GM10248 (cell line): ENCODE measurements at regions of chr16 and their contacts with region 1.

Region 1: GRCh38 chr16:56964243-56965148 is 2.7 kb downstream of the CETP start:
- DNase-seq: peak; percentile 90
- CTCF ChIP-seq: peak; percentile 99

Region 2: DNA sequence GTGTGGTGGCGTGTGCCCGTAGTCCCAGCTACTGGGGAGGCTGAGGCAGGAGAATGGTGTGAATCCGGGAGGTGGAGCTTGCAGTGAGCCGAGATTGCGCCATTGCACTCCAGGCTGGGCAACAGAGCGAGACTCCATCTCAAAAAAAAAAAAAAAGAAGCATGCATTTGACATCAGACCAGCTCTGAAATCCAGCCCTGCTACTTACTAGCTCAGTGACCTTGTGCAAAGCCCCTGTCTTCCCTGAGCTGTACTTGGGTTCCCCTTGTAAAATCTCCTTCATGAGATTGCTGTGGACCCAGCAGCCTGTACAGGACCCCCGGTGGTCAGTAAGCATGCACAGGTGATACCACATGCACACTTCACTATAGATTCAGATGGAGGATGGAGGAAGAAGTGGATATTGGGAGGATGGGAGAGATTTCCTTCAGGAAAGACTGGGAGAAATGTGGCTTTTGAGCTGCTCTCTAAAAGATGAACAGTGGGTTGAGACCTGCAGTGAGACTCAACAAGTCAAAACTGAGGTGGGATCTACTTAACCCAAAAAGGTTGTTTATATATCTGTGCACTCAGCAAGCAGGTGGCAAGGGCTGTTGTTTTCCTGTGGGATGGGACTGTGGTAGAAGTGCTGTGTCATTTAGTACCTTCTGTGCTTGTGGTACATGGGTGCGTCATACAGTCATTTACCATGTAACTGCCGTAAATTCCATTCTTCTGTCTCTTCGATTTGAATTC is 25.9 kb before region 1 on chr16:
- CTCF ChIA-PET with region 1: interaction called, 12 read pairs
- POLR2A ChIA-PET with region 1: no interaction called
- DNase-seq: no peak
- CTCF ChIP-seq: no peak

Region 3: DNA sequence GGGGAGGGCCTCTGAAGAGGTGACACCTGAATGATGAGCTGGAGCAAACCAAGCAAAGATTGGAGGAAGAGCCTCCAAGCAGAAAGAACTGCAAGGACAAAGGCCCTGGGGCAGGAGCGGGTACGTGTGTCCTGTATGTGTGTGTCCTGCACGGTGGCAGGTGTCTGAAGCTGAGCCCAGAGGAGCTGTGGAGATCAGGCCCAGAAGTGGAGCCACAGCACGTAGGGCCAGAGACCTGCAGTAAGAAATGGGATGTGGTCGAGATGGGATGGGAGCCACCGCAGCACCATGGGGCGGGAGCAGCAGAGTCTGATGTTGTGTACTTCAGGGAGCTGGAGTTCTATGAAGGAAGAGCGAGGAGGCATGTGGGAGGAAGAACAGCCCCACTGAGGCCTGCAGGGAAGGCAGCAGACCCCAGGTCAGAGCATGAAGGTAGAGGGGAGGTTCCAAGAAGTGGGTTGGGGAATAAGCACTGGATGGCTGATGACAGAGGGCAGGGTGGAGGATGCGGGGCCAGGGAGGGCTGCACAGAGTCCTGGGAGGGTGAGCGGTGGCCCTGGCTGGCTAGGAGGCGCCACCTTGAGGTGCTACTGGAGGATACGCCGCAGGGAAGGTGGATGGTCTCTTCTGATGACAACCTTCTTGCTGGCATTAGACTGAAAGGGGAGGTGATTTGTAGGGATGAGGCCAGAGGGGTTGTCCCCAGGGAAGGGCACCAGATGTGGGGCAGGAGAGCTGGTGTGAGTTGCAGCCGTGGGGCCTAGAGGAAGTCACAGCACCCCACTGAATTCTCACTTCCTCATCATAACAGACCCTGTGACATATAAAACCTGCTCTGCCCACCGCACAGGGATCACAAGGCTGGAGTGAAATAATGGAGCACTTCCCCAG is 13.4 kb before region 1 on chr16:
- CTCF ChIA-PET with region 1: interaction called, 209 read pairs
- POLR2A ChIA-PET with region 1: interaction called, 4 read pairs
- DNase-seq: peak; percentile 78
- CTCF ChIP-seq: peak; percentile 75

Region 4: DNA sequence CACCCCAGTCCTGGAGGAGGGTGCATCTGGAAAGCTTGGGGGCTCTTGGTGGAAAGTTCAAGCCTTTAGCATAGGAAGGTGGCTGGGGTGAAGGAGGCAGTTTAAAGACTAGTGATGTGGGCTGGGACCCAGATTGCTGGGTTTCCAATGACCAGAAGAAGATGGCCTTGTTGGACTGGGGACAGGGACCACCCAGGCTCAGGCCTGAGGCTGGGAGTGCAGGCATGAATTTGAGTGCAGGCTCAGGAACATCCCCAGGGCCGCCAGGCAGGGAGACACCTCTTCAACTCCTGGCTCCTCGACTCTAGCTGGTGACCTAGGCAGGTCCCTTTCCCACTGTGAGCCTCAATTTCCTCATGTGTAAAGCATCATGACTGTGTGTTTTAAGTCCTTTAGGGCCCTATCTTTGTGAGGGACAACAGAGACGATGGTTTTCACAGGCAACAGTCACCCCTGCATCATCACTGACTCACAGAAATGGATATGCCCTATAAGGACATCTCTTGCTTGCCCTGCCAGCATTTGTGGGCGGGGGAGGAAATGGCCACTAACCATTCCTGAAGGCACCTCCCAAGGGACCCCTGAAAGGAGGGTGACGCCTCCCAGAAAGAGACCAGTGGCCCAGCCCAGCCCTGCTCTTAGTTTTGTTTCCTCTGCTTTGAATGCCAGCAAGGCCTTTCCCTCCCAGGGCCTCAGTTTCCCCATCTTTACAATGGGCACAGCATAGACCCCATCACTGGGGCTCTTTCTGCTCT is 36.0 kb after region 1 on chr16:
- CTCF ChIA-PET with region 1: interaction called, 22 read pairs
- POLR2A ChIA-PET with region 1: no interaction called
- DNase-seq: peak; percentile 56
- CTCF ChIP-seq: no peak

Region 5: GRCh38 chr16:57023541-57024249 is 59.2 kb after region 1 on chr16:
- CTCF ChIA-PET with region 1: interaction called, 38 read pairs
- POLR2A ChIA-PET with region 1: no interaction called
- DNase-seq: no peak
- CTCF ChIP-seq: no peak

Region 6: DNA sequence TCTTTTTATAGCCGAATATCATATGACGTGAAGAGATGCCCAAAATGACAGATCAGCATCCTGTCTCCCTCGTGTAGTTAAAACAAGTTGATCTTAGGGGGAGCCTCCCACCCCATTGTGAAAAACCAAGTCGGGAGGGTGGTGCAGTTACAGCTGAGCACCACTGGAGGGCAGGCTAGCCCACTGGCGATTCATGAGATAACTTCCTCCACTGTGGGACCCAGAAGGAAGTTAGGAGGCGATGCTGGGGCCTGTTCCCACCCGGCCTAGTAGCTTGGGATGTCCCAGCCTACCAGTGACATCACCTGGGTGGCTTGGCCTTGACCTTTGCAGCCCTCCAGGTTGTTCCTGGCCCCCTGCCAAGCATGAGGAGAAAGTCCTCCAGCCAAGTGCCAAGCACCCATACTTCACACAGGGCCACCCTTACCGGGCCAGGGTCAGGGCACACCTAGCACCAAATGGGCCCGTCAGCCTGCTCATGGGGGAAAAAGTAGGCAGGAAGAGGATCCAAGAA is 119.8 kb after region 1 on chr16:
- CTCF ChIA-PET with region 1: interaction called, 37 read pairs
- POLR2A ChIA-PET with region 1: no interaction called
- DNase-seq: peak; percentile 88
- CTCF ChIP-seq: peak; percentile 95